Prostate gland (tissue), 2 donors: ENCODE measurements at regions of chr3 and their contacts with region 1.

Region 1: DNA sequence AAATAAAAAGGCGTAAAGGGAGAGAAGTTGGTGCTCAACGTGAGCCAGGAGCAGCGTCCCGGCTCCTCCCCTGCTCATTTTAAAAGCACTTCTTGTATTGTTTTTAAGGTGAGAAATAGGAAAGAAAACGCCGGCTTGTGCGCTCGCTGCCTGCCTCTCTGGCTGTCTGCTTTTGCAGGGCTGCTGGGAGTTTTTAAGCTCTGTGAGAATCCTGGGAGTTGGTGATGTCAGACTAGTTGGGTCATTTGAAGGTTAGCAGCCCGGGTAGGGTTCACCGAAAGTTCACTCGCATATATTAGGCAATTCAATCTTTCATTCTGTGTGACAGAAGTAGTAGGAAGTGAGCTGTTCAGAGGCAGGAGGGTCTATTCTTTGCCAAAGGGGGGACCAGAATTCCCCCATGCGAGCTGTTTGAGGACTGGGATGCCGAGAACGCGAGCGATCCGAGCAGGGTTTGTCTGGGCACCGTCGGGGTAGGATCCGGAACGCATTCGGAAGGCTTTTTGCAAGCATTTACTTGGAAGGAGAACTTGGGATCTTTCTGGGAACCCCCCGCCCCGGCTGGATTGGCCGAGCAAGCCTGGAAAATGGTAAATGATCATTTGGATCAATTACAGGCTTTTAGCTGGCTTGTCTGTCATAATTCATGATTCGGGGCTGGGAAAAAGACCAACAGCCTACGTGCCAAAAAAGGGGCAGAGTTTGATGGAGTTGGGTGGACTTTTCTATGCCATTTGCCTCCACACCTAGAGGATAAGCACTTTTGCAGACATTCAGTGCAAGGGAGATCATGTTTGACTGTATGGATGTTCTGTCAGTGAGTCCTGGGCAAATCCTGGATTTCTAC is at the start of gene RARB:
- DNase-seq: peak; percentile 79
- H3K4me3 ChIP-seq: peak within 1 kb of the TSS; percentile 38 to 44
- H3K27ac ChIP-seq: peak within 1 kb of the TSS; percentile 82
- H3K4me1 ChIP-seq: peaks cover 4% of the 10 kb centered on the region
- H3K27me3 ChIP-seq: peaks cover 3% of the 10 kb centered on the region
- CTCF ChIP-seq: no peak
- POLR2A ChIP-seq: peak; percentile 91
- total RNA-seq, gene RARB: 4.4 to 17.2 TPM

Region 2: GRCh38 chr3:25033407-25034029 is 394.6 kb before region 1 on chr3:
- intact Hi-C with region 1: loop called (anchors 2 kb)
- DNase-seq: no peak
- H3K4me3 ChIP-seq: no peak overlapping the region
- H3K27ac ChIP-seq: no peak overlapping the region
- H3K4me1 ChIP-seq: no peaks in the 10 kb centered on the region
- H3K27me3 ChIP-seq: no peaks in the 10 kb centered on the region
- CTCF ChIP-seq: peak in 3 of 4 experiments; percentile 14 to 39 (median 15)
- POLR2A ChIP-seq: no peak

Region 3: DNA sequence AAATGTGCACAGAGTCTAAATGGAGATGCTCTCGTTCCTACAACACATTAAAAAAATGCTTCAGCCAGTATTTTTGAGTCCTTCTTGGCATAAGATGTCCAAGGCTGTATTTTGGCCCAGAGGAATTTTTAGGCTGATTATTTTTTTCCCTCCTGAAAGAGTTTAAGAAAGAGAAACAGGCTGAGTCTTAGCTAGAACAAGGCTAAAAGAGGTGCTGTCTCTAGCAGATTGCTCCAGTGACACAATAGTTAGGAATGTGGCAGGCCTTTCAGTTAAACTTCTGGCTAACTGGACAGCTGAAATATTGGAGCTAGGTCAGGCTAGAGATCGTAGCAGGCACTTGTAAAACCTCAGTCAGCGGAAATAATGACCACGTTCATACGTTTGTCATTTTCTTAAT is 271.5 kb before region 1 on chr3:
- intact Hi-C with region 1: loop called (anchors 10 kb)
- DNase-seq: no peak
- H3K4me3 ChIP-seq: no peak overlapping the region
- H3K27ac ChIP-seq: no peak overlapping the region
- H3K4me1 ChIP-seq: no peaks in the 10 kb centered on the region
- H3K27me3 ChIP-seq: no peaks in the 10 kb centered on the region
- CTCF ChIP-seq: no peak
- POLR2A ChIP-seq: no peak

Region 4: GRCh38 chr3:25573386-25574171 is 145.4 kb after region 1 on chr3:
- intact Hi-C with region 1: loop called (anchors 5 kb)
- DNase-seq: no peak
- H3K4me3 ChIP-seq: no peak overlapping the region
- H3K27ac ChIP-seq: peak overlapping the region; percentile 49 to 60
- H3K4me1 ChIP-seq: no peaks in the 10 kb centered on the region
- H3K27me3 ChIP-seq: no peaks in the 10 kb centered on the region
- CTCF ChIP-seq: no peak
- POLR2A ChIP-seq: no peak